Esophagus squamous epithelium (tissue), 5 donors: ENCODE measurements at regions of chr7 and their contacts with region 1.

Region 1: DNA sequence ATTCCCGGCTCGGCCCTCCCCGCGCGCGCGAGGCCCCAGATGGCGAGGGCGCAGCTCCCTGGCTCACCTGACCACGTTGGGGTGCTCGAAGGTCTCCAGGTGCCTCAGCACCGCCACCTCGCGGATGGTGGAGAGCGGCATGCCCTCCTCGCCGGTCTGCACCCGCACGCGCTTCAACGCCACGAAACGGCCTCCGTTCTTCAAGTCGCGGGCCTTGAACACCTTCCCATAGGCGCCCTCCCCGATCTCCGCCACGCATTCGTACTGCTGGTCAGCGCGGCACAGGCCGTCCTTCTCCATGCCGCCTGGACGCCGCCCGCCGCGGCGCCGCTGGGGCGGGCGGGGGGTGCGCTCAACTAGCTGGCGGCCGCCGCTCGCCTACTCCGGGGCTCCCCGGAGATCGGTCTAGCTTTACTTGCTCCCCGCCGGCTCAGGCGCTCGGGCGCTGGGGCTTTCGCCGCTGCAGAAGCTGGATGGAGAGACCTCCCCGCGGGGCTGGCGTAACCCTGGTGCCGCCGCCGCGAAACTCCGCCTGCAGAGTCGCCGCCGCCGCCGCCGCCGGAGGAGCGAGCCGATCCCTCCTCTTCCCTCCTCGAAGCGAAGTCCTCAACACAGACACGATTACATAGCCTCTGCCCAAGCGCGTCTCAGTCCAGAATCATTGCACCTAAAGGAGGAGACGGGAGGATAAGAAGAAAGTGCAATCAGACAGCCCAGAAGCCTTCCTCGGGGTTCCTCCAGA is 3.2 kb downstream of the CDK6 start:
- DNase-seq: peak; percentile 32
- H3K4me3 ChIP-seq: peak overlapping the region; percentile 76 to 89 (median 85)
- H3K27ac ChIP-seq: peak overlapping the region; percentile 86 to 93 (median 92)
- H3K4me1 ChIP-seq: peaks cover 5 to 59% (median 20%) of the 10 kb centered on the region in 3 donors
- H3K27me3 ChIP-seq: no peaks in the 10 kb centered on the region
- CTCF ChIP-seq: peak; percentile 82 to 95 (median 88)
- POLR2A ChIP-seq: peak in 2 of 4 donors; percentile 7 to 39

Region 2: GRCh38 chr7:92621026-92621540 is 212.1 kb before region 1 on chr7:
- intact Hi-C with region 1: loop called (anchors 5 kb)
- DNase-seq: no peak
- H3K4me3 ChIP-seq: no peak overlapping the region
- H3K27ac ChIP-seq: peak overlapping the region; percentile 29 to 69 (median 52)
- H3K4me1 ChIP-seq: peaks cover 4 to 30% (median 19%) of the 10 kb centered on the region in 3 donors
- H3K27me3 ChIP-seq: no peaks in the 10 kb centered on the region
- CTCF ChIP-seq: peak; percentile 40 to 87 (median 79)
- POLR2A ChIP-seq: no peak

Region 3: DNA sequence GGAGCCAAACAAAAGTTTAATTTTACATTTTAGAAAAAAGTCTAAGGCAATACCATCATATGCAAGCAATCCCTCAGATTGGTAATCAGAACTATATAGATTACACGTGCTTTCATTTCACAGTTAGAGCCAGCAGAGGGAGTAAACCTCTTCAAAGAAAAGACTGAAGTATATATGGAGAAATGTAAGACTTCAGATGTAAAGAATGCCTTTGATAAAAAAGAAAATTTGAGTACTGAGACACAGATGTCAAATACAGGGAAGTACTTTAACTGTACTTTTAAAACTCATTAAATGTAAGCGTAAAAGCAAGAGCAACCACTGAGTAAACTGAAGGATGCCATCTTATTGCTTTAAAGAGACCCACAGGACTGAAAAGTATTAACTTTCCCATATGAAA is 141.6 kb before region 1 on chr7:
- intact Hi-C with region 1: loop called (anchors 5 kb)
- DNase-seq: no peak
- H3K4me3 ChIP-seq: no peak overlapping the region
- H3K27ac ChIP-seq: no peak overlapping the region
- H3K4me1 ChIP-seq: peaks cover 0 to 15% (median 3%) of the 10 kb centered on the region in 3 donors
- H3K27me3 ChIP-seq: no peaks in the 10 kb centered on the region
- CTCF ChIP-seq: peak in 5 of 6 experiments; percentile 50 to 76 (median 55)
- POLR2A ChIP-seq: no peak